CD8-positive, alpha-beta T cell (primary cell): ENCODE measurements at regions of chr9 and their contacts with region 1.

Region 1: DNA sequence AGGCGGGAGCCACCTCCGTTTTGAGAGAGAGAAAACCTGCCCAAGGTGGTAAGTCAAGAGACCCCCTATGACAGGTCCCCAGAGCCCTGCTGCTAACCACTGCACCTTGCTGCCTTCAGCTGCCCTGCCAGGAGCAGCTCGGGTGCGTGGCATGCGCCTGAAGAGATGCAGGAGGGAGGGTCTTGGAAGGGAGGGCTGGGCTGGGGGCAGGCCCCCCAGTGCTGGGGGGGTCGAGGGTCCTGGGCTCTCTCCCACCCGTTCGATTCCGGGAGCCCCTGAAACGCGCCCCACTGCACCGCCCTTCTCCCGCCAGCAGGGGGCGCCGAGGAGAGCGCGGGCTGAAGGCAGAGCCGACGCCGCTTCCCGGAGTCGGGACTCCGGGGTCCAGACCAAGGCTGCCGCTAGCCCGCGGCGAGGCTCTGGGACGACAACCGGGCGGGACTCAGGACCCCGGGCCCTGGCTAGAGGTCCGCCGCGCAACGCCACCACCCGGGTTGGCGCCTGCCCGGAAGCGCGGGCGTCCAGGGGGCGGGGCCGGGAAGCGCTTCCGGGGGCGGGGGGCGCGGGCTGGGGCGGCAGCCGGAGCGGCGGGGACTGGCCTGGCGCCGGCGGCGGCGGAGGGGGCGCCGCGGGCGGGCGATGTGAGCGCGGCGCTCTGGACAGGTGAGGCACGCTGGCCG is at the start of gene ZBTB34:
- DNase-seq: peak; percentile 59 to 90 (median 76)
- ATAC-seq: peak; percentile 84
- H3K4me3 ChIP-seq: peak within 1 kb of the TSS; percentile 71 to 74
- H3K4me3 Mint-ChIP-seq: peak within 1 kb of the TSS; percentile 86
- H3K27ac ChIP-seq: peak within 1 kb of the TSS; percentile 57 to 76
- H3K27ac Mint-ChIP-seq: peak within 1 kb of the TSS; percentile 91
- H3K4me1 ChIP-seq: peaks cover 30% of the 10 kb centered on the region
- H3K4me1 Mint-ChIP-seq: peaks cover 30% of the 10 kb centered on the region
- H3K27me3 ChIP-seq: no peaks in the 10 kb centered on the region
- H3K27me3 Mint-ChIP-seq: peaks cover 2% of the 10 kb centered on the region
- CTCF ChIP-seq: peak; percentile 99
- total RNA-seq, gene ZBTB34: 3.0 to 3.3 TPM

Region 2: GRCh38 chr9:126756876-126757415 is 103.3 kb before region 1 on chr9:
- CTCF ChIA-PET with region 1: no interaction called
- POLR2A ChIA-PET with region 1: no interaction called
- intact Hi-C with region 1: no loop called
- DNase-seq: no peak
- ATAC-seq: no peak
- H3K4me3 ChIP-seq: no peak overlapping the region
- H3K4me3 Mint-ChIP-seq: no peak overlapping the region
- H3K27ac ChIP-seq: no peak overlapping the region
- H3K27ac Mint-ChIP-seq: no peak overlapping the region
- H3K4me1 ChIP-seq: no peaks in the 10 kb centered on the region
- H3K4me1 Mint-ChIP-seq: no peaks in the 10 kb centered on the region
- H3K27me3 ChIP-seq: no peaks in the 10 kb centered on the region
- H3K27me3 Mint-ChIP-seq: no peaks in the 10 kb centered on the region
- CTCF ChIP-seq: no peak

Region 3: GRCh38 chr9:126804696-126805545 is 55.3 kb before region 1 on chr9 and contains the start of gene ZBTB43:
- CTCF ChIA-PET with region 1: no interaction called
- POLR2A ChIA-PET with region 1: interaction called, 3 read pairs
- intact Hi-C with region 1: loop called (anchors 1 to 2 kb)
- DNase-seq: peak; percentile 97 to 99 (median 99)
- ATAC-seq: peak; percentile 82
- H3K4me3 ChIP-seq: peak within 1 kb of the TSS; percentile 83 to 85
- H3K4me3 Mint-ChIP-seq: peak within 1 kb of the TSS; percentile 98
- H3K27ac ChIP-seq: peak within 1 kb of the TSS; percentile 87 to 93
- H3K27ac Mint-ChIP-seq: peak within 1 kb of the TSS; percentile 99
- H3K4me1 ChIP-seq: peaks cover 32% of the 10 kb centered on the region
- H3K4me1 Mint-ChIP-seq: peaks cover 43% of the 10 kb centered on the region
- H3K27me3 ChIP-seq: no peaks in the 10 kb centered on the region
- H3K27me3 Mint-ChIP-seq: no peaks in the 10 kb centered on the region
- CTCF ChIP-seq: no peak
- total RNA-seq, gene ZBTB43: 55.7 to 65.0 TPM

Region 4: DNA sequence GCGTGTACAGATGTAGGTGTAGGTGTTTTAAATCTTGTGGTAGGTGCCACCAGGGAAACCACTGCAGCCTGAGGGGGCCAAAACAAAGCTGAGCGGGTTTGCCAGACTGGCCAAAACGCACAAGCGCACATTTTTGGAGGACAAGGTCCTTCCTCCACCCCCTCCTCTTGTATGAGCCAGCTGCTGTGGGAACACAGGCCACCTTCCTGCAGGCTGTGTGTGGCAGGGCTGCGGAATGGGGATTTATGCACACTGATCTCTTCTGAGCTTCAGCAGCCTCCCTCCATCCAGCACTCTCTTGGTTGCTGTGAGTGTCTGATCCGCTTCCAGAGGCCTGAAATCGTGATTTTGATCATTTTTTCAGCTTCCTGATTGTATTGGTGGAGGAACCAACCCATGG is 33.0 kb before region 1 on chr9:
- CTCF ChIA-PET with region 1: no interaction called
- POLR2A ChIA-PET with region 1: no interaction called
- intact Hi-C with region 1: no loop called
- DNase-seq: no peak
- ATAC-seq: no peak
- H3K4me3 ChIP-seq: no peak overlapping the region
- H3K4me3 Mint-ChIP-seq: no peak overlapping the region
- H3K27ac ChIP-seq: no peak overlapping the region
- H3K27ac Mint-ChIP-seq: no peak overlapping the region
- H3K4me1 ChIP-seq: peaks cover 4% of the 10 kb centered on the region
- H3K4me1 Mint-ChIP-seq: peaks cover 40% of the 10 kb centered on the region
- H3K27me3 ChIP-seq: no peaks in the 10 kb centered on the region
- H3K27me3 Mint-ChIP-seq: no peaks in the 10 kb centered on the region
- CTCF ChIP-seq: no peak

Region 5: GRCh38 chr9:126849591-126850225 is 10.5 kb before region 1 on chr9:
- CTCF ChIA-PET with region 1: interaction called, 10 read pairs
- POLR2A ChIA-PET with region 1: no interaction called
- intact Hi-C with region 1: no loop called
- DNase-seq: no peak
- ATAC-seq: no peak
- H3K4me3 ChIP-seq: no peak overlapping the region
- H3K4me3 Mint-ChIP-seq: no peak overlapping the region
- H3K27ac ChIP-seq: no peak overlapping the region
- H3K27ac Mint-ChIP-seq: no peak overlapping the region
- H3K4me1 ChIP-seq: no peaks in the 10 kb centered on the region
- H3K4me1 Mint-ChIP-seq: no peaks in the 10 kb centered on the region
- H3K27me3 ChIP-seq: peaks cover 3 to 7% of the 10 kb centered on the region in 2 experiments
- H3K27me3 Mint-ChIP-seq: peaks cover 27% of the 10 kb centered on the region
- CTCF ChIP-seq: no peak

Region 6: GRCh38 chr9:127058011-127058644 is 197.9 kb after region 1 on chr9:
- CTCF ChIA-PET with region 1: no interaction called
- POLR2A ChIA-PET with region 1: no interaction called
- intact Hi-C with region 1: no loop called
- DNase-seq: no peak
- ATAC-seq: no peak
- H3K4me3 ChIP-seq: no peak overlapping the region
- H3K4me3 Mint-ChIP-seq: no peak overlapping the region
- H3K27ac ChIP-seq: no peak overlapping the region
- H3K27ac Mint-ChIP-seq: no peak overlapping the region
- H3K4me1 ChIP-seq: no peaks in the 10 kb centered on the region
- H3K4me1 Mint-ChIP-seq: no peaks in the 10 kb centered on the region
- H3K27me3 ChIP-seq: no peaks in the 10 kb centered on the region
- H3K27me3 Mint-ChIP-seq: no peaks in the 10 kb centered on the region
- CTCF ChIP-seq: no peak